ENCODE measurements at regions of chr10 and their contacts with region 1.

Region 1: GRCh38 chr10:11525503-11525902 is 85.9 kb downstream of the USP6NL start:
- DNase-seq: no peak
- CTCF ChIP-seq: no peak

Region 2: GRCh38 chr10:10786109-10787090 is 739.1 kb before region 1 on chr10:
- in situ Hi-C with region 1: no loop called
- DNase-seq: no peak
- CTCF ChIP-seq: no peak

Region 3: DNA sequence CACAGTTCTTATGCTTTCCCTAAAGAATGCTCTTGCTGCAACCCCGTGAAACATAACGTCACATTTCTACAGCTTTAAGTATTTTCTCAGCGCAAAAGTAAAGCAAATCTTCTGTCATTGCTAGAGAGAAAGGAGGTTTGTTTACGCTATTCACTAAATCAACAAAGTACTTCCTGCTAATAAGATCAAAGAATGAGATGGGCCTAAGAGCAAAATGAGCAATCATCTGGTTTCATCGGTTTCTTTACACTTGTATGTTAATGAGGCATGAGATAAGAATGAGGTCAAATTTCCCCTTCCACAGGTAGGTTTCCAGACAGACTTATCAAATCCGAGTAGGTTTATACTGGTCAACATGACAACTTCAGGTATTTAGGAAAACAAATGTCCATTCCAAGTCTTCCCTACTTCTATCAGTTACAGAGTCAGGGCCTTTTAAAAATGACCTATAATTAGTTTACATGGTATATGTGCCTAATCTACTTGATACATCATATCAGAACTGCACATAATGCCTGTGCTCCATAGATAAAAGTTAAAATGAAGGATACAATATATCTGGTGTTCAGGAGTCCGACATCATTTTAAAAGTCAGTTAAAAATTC is 77.5 kb after region 1 on chr10:
- in situ Hi-C with region 1: loop called (anchors 10 kb)
- DNase-seq: peak; percentile 41
- CTCF ChIP-seq: no peak